ACHN (cell line): ENCODE measurements at regions of chr7 and their contacts with region 1.

Region 1: DNA sequence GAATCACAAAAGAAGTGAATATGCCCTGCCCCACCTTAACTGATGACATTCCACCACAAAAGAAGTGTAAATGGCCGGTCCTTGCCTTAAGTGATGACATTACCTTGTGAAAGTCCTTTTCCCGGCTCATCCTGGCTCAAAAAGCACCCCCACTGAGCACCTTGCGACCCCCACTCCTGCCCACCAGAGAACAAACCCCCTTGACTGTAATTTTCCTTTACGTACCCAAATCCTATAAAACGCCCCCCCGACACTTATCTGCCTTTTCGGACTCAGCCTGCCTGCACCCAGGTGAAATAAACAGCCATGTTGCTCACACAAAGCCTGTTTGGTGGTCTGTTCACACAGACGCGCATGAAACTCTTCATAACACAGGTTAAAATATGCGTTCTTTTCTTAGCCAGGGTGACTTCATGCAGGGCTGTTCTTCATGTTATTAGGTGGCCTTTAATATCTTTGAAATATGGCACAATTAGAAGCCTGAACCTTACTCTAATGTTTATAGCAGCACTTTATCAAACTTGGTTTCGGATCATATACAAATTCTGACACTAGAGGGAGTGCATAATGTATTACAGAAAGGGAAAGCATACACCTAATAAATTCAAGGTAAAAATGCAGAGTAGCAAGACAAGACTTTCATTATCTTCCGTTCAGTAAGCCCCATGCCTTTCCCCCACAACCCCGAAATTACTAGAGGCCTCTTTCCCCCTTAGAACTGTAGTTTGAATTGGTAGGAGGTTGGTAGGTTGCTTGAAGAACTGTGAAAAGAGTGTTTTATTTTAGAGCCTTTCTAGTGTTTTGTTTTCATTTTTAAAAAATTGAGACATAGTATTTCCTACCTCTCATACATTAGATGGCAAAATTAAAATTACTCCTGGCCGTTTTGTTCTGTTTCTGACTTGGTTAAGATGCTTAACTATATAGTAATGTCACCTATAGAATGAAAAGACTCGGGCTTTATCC is 117.9 kb downstream of the NPY start:
- DNase-seq: peak; percentile 74

Region 2: GRCh38 chr7:24665564-24666294 is 263.8 kb after region 1 on chr7:
- in situ Hi-C with region 1: loop called (anchors 25 kb)
- DNase-seq: peak; percentile 76